ENCODE measurements at regions of chr5 and their contacts with region 1.

Region 1: DNA sequence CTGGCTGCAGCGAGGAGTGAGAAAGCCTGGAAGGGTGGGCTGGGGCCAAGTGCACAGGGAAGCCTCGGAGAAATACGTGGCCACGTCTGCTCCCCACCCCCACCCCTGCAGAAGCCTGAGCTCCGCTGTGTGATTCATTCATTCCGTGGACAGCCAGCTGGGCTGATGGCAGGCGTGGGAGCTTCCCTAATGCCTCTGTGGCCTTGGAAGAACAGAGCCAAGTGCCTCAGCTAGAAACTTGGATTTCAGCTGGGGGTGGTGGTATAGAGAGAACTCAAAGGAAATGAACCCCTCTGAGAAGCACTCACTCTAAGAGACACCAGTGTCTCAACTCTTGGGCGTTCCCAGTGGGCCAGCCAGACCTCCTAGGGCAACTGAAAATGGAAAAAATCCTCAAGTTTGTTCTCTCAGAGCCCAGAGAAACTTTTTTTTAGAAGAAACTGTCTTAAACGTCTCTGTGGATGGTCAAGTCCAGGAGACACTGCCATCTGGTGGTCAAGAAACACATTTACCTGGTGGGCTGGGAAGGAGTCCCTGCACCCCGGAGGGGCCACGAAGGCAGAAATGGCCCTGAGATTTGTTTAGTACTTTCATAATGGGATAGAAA is 18.0 kb downstream of the ATOX1 start:
- DNase-seq: peak; percentile 79
- H3K27ac ChIP-seq: peak overlapping the region; percentile 95
- CTCF ChIP-seq: peak; percentile 92

Region 2: DNA sequence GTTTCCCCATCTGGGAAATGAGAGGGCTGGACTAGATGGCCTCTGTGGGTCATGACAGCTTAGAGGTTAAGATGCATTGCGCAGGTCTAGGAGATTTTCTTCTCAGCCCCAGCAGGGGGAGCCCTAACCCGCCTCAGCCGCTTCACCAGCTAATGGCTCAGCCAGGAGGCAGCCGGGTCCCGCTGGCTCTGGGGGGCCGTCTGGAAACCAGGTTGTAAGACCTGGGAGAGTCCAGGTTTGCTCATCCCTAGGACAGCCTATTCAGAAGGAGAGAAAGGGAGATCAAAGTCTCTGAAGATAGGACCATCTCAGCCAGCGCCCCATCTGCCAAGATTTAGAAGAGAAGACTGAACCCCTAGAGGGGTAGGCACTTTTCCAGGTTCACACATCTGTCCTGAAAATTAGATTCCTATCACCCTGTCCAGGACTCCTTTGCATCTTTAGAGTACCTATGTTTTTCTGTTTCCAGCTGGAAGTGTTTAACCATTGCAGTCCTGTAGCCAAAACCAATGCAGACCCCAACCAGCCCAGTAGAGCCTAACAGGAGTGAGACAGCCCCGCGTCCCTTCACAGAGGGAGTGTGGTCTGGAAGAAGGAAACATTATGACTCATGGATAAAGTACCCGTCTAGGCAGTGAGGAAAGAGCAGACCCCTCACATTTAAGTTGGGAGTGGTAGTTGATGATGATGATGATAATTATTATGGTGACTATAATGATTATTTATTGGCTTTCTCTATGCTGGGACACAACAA is 81.3 kb before region 1 on chr5:
- CTCF ChIA-PET with region 1: interaction called, 84 read pairs
- POLR2A ChIA-PET with region 1: interaction called, 7 read pairs
- DNase-seq: peak; percentile 88
- H3K27ac ChIP-seq: no peak overlapping the region
- CTCF ChIP-seq: peak; percentile 96

Region 3: DNA sequence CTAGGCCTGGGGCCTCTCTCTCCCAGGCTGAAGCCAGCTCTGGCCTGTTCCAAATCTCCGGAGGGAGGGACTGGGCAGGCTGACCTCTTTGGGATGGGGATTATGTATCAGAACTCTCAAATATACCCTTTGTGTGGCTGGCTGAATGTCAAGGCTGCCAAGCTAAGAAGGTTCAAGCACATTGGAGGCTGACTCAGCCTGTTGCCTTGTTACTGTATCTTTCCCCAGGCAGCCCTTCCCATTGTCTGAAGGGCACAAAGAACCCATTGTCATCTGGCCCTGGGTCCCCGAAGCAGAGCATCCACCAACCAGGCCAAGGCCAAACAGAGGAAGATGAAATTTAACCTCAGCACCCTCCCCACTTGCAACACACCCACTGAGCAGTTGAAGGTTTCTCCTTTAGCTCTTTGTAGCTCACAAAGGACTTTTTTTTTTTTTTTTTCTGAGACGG is 46.4 kb before region 1 on chr5:
- CTCF ChIA-PET with region 1: interaction called, 3 read pairs
- POLR2A ChIA-PET with region 1: interaction called, 11 read pairs
- DNase-seq: no peak
- H3K27ac ChIP-seq: no peak overlapping the region; the same call in 1 of the 2 replicates
- CTCF ChIP-seq: no peak

Measured in RWPE1 (cell line).